Prostate gland (tissue), 2 donors: ENCODE measurements at regions of chr16 and their contacts with region 1.

Region 1: DNA sequence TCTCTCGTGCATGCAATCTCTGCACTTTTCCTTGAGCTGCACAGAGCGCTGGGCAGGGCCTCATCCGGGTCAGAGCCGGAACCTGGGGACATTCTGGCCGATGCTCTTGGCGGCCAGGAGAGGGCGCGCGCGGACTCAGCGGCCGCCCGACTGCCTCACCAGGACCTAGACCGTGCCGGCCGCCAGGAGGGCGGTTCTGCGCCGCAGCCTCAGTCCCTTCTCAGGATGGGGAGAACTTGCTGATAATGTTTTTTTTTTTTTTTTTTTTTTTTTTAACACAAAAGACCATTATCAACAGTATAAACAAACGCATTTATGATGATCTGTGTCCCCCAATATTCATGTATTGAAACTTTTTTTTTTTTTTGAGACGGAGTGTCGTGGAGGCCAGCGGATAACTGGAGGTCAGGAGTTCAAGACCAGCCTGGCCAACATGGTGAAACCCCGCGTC is 8.1 kb upstream of the FLYWCH2 start:
- DNase-seq: peak; percentile 74
- H3K4me3 ChIP-seq: no peak overlapping the region
- H3K27ac ChIP-seq: peak overlapping the region; percentile 15 to 41
- H3K4me1 ChIP-seq: peaks cover 3% of the 10 kb centered on the region
- H3K27me3 ChIP-seq: no peaks in the 10 kb centered on the region
- CTCF ChIP-seq: peak; percentile 79 to 99 (median 92)
- POLR2A ChIP-seq: no peak

Region 2: GRCh38 chr16:2911580-2912329 is 36.8 kb after region 1 on chr16 and contains the start of gene FLYWCH1:
- intact Hi-C with region 1: loop called (anchors 5 kb)
- DNase-seq: peak; percentile 98
- H3K4me3 ChIP-seq: peak within 1 kb of the TSS; percentile 86 to 92
- H3K27ac ChIP-seq: peak within 1 kb of the TSS; percentile 85 to 89
- H3K4me1 ChIP-seq: peaks cover 6% of the 10 kb centered on the region
- H3K27me3 ChIP-seq: no peaks in the 10 kb centered on the region
- CTCF ChIP-seq: peak in 2 of 4 experiments; percentile 31 to 44
- POLR2A ChIP-seq: peak; percentile 84
- total RNA-seq, gene FLYWCH1: 53.0 to 55.6 TPM

Region 3: GRCh38 chr16:2926650-2927646 is 52.0 kb after region 1 on chr16:
- intact Hi-C with region 1: loop called (anchors 5 kb)
- DNase-seq: peak; percentile 86
- H3K4me3 ChIP-seq: no peak overlapping the region
- H3K27ac ChIP-seq: peak overlapping the region; percentile 48 to 74
- H3K4me1 ChIP-seq: peaks cover 10% of the 10 kb centered on the region
- H3K27me3 ChIP-seq: no peaks in the 10 kb centered on the region
- CTCF ChIP-seq: peak; percentile 89 to 98 (median 97)
- POLR2A ChIP-seq: no peak